Activated CD8-positive, alpha-beta T cell treated with anti-CD3 and anti-CD28 coated beads for 36 hours (primary cell): ENCODE measurements at regions of chr18 and their contacts with region 1.

Region 1: GRCh38 chr18:45879681-45880655 is 54.5 kb downstream of the SIGLEC15 start:
- DNase-seq: peak; percentile 79
- ATAC-seq: peak; percentile 94
- H3K4me3 Mint-ChIP-seq: no peak overlapping the region
- H3K27ac Mint-ChIP-seq: no peak overlapping the region
- H3K4me1 Mint-ChIP-seq: peaks cover 17% of the 10 kb centered on the region
- H3K27me3 Mint-ChIP-seq: no peaks in the 10 kb centered on the region
- CTCF ChIP-seq: peak; percentile 100

Region 2: GRCh38 chr18:45664824-45665763 is 214.9 kb before region 1 on chr18:
- CTCF ChIA-PET with region 1: interaction called, 155 read pairs
- POLR2A ChIA-PET with region 1: interaction called, 4 read pairs
- intact Hi-C with region 1: loop called (anchors 1 kb)
- DNase-seq: peak; percentile 80
- ATAC-seq: peak; percentile 56
- H3K4me3 Mint-ChIP-seq: no peak overlapping the region
- H3K27ac Mint-ChIP-seq: peak overlapping the region; percentile 61
- H3K4me1 Mint-ChIP-seq: peaks cover 50% of the 10 kb centered on the region
- H3K27me3 Mint-ChIP-seq: no peaks in the 10 kb centered on the region
- CTCF ChIP-seq: peak; percentile 91

Region 3: GRCh38 chr18:45775241-45775676 is 104.7 kb before region 1 on chr18:
- CTCF ChIA-PET with region 1: interaction called, 16 read pairs
- POLR2A ChIA-PET with region 1: no interaction called
- intact Hi-C with region 1: no loop called
- DNase-seq: peak; percentile 79
- ATAC-seq: peak; percentile 94
- H3K4me3 Mint-ChIP-seq: peak overlapping the region; percentile 75
- H3K27ac Mint-ChIP-seq: peak overlapping the region; percentile 57
- H3K4me1 Mint-ChIP-seq: peaks cover 21% of the 10 kb centered on the region
- H3K27me3 Mint-ChIP-seq: peaks cover 17% of the 10 kb centered on the region
- CTCF ChIP-seq: no peak

Region 4: DNA sequence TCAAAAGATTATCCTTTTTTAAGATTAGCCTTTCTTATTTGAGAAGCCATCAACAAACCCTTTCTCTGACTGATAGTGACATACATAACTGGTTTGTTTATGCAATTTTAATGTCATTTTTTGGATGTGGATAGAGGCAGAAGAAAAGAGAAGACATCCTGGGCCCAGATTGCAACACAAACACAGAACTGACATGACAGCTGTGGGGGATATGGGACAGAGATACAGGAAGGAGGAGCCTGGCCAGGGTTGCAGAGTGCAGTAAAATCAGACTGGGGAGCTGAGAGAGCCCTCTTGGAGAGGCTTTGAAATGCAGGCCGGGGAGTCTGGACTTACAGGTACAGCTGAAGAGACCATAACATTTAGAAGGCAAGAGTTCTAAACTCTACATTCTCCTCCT is 10.6 kb after region 1 on chr18:
- CTCF ChIA-PET with region 1: interaction called, 12 read pairs
- POLR2A ChIA-PET with region 1: interaction called, 3 read pairs
- intact Hi-C with region 1: no loop called
- DNase-seq: no peak
- ATAC-seq: no peak
- H3K4me3 Mint-ChIP-seq: no peak overlapping the region
- H3K27ac Mint-ChIP-seq: no peak overlapping the region
- H3K4me1 Mint-ChIP-seq: peaks cover 6% of the 10 kb centered on the region
- H3K27me3 Mint-ChIP-seq: no peaks in the 10 kb centered on the region
- CTCF ChIP-seq: no peak

Region 5: GRCh38 chr18:45935591-45936335 is 55.8 kb after region 1 on chr18:
- CTCF ChIA-PET with region 1: interaction called, 11 read pairs
- POLR2A ChIA-PET with region 1: no interaction called
- intact Hi-C with region 1: no loop called
- DNase-seq: no peak
- ATAC-seq: peak; percentile 59
- H3K4me3 Mint-ChIP-seq: no peak overlapping the region
- H3K27ac Mint-ChIP-seq: peak overlapping the region; percentile 31
- H3K4me1 Mint-ChIP-seq: peaks cover 33% of the 10 kb centered on the region
- H3K27me3 Mint-ChIP-seq: no peaks in the 10 kb centered on the region
- CTCF ChIP-seq: no peak

Region 6: GRCh38 chr18:45981821-45982220 is 101.9 kb after region 1 on chr18:
- CTCF ChIA-PET with region 1: no interaction called
- POLR2A ChIA-PET with region 1: no interaction called
- intact Hi-C with region 1: no loop called
- DNase-seq: no peak
- ATAC-seq: no peak
- H3K4me3 Mint-ChIP-seq: no peak overlapping the region
- H3K27ac Mint-ChIP-seq: no peak overlapping the region
- H3K4me1 Mint-ChIP-seq: peaks cover 4% of the 10 kb centered on the region
- H3K27me3 Mint-ChIP-seq: no peaks in the 10 kb centered on the region
- CTCF ChIP-seq: no peak

Region 7: DNA sequence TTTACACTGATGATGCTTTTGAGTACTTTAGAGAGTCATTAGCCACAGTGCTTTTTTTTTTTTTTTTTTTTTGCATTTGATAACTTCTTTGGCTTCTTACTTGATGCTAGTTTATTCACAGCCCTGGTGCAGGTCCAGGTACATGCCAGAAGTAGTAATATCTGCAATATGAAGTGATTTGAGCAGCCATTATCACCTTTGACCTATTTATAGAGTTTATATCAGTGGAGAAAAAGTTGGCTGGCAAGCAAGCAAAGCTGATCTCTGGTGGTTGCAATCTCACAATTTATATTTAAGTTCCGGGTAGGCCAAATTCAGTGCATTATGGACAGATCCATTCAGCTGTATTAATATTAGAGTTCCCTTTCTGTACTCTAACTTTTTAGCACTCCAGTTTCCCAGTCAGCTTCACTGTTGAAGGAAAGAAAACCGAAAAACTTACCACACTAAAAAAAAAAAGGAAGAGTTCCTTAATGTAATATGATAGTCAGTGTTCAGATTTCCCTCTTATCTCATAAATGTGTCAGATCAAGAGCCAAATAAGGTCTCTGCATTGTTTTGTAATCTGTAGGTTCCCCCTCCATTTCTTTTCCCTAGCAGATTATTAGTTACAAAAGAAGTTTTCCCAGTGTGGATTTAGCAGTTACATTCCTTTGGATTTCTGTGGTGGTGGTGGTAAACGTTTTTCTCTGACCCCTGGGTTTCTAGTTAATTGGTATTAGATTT is 302.8 kb after region 1 on chr18:
- CTCF ChIA-PET with region 1: no interaction called
- POLR2A ChIA-PET with region 1: no interaction called
- intact Hi-C with region 1: no loop called
- DNase-seq: no peak
- ATAC-seq: no peak
- H3K4me3 Mint-ChIP-seq: no peak overlapping the region
- H3K27ac Mint-ChIP-seq: peak overlapping the region; percentile 76
- H3K4me1 Mint-ChIP-seq: peaks cover 55% of the 10 kb centered on the region
- H3K27me3 Mint-ChIP-seq: no peaks in the 10 kb centered on the region
- CTCF ChIP-seq: no peak